Panc1 (cell line): ENCODE measurements at regions of chr4 and their contacts with region 1.

Region 1: DNA sequence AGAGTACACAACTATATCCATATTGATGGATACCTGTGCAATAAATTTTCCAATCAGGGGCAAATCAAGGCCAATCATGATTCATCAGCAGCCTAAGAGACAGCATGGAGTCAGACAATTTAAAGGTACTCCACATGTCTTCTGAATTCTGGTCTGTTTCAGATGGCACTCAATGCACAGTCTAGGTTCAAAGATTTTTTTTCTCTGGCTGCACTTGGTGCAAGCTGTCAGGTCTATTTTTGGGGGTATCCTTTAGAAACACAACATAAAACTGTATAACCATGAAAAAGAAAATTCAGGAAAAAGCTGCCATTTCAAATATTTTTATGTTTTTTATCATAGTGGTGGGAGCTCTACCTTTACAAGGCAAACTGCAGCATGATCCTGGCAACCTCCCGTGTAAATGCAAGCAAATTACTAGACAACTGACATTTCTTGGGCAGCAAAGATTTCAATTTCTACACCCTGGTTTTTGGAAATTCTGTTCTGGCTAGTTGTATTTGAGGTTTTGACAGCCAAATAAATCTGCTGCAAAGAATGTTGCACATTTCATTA is 310.3 kb downstream of the KCNIP4 start:
- DNase-seq: no peak
- ATAC-seq: no peak
- H3K4me3 ChIP-seq: no peak overlapping the region
- H3K27ac ChIP-seq: no peak overlapping the region
- H3K4me1 ChIP-seq: no peaks in the 10 kb centered on the region
- H3K27me3 ChIP-seq: no peaks in the 10 kb centered on the region
- CTCF ChIP-seq: no peak

Region 2: DNA sequence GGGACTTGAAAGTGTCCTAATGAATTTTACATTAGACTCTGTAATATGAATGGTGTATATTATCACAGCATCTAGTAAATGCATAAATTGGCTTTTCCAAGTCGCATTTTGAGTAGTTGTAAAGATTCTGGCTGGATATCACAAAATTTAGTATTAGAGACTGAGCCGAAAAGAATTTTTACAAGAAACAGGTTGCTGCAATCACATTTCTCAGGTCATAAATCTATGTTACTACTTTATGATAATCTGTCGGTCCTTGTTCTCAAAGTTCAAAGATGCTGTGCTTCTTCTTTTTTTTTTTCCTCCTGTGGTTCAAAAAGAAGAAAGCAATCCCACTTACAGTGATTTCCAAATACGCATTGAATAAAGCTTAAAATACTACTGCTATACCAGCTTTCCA is 56.9 kb after region 1 on chr4:
- CTCF ChIA-PET with region 1: no interaction called
- POLR2A ChIA-PET with region 1: interaction called, 11 read pairs
- in situ Hi-C with region 1: no loop called
- intact Hi-C with region 1: no loop called
- DNase-seq: no peak
- ATAC-seq: no peak
- H3K4me3 ChIP-seq: no peak overlapping the region
- H3K27ac ChIP-seq: no peak overlapping the region
- H3K4me1 ChIP-seq: no peaks in the 10 kb centered on the region
- H3K27me3 ChIP-seq: no peaks in the 10 kb centered on the region; the same call in 1 of the 2 replicates
- CTCF ChIP-seq: no peak